IMR-90 (cell line): ENCODE measurements at regions of chr9 and their contacts with region 1.

Region 1: GRCh38 chr9:133485361-133486260 is 6.7 kb upstream of the SLC2A6 start:
- DNase-seq: no peak
- ATAC-seq: peak; percentile 4; the same call in 1 of the 2 replicates
- H3K4me3 ChIP-seq: no peak overlapping the region
- H3K27ac ChIP-seq: no peak overlapping the region
- H3K4me1 ChIP-seq: peaks cover 2% of the 10 kb centered on the region; the same call in 1 of the 2 replicates
- H3K27me3 ChIP-seq: peaks cover 7% of the 10 kb centered on the region; the same call in 1 of the 2 replicates
- CTCF ChIP-seq: no peak
- POLR2A ChIP-seq: no peak
- RAD21 ChIP-seq: no peak

Region 2: GRCh38 chr9:133023117-133023890 is 462.3 kb before region 1 on chr9:
- CTCF ChIA-PET with region 1: no interaction called
- POLR2A ChIA-PET with region 1: no interaction called
- dilution Hi-C with region 1: no loop called
- in situ Hi-C with region 1: loop called (anchors 25 kb)
- intact Hi-C with region 1: loop called (anchors 1 kb)
- DNase-seq: no peak
- ATAC-seq: no peak
- H3K4me3 ChIP-seq: no peak overlapping the region
- H3K27ac ChIP-seq: no peak overlapping the region
- H3K4me1 ChIP-seq: no peaks in the 10 kb centered on the region
- H3K27me3 ChIP-seq: no peaks in the 10 kb centered on the region; the same call in 1 of the 2 replicates
- CTCF ChIP-seq: no peak
- POLR2A ChIP-seq: no peak
- RAD21 ChIP-seq: no peak

Region 3: DNA sequence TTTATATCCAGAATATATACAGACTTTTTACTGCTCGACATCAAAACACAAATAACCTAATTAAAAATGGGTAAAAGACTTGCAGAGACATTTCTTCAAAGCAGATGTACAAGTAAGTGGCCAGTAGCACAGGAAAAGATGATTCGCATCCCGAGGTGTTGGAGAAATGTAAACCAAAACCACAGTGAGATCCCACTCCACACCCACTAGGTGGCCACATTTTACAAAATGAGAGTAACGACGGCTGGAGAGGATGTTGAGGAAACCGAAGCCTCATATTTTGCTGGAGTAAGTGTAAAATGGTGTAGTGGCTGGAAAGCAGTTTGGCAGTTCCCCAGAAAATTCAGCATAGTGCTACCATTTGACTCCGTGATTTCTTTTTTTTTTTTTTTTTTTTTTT is 300.6 kb before region 1 on chr9:
- CTCF ChIA-PET with region 1: no interaction called
- POLR2A ChIA-PET with region 1: no interaction called
- dilution Hi-C with region 1: no loop called
- in situ Hi-C with region 1: loop called (anchors 5 kb)
- intact Hi-C with region 1: no loop called
- DNase-seq: peak; percentile 62
- ATAC-seq: peak; percentile 79
- H3K4me3 ChIP-seq: no peak overlapping the region
- H3K27ac ChIP-seq: no peak overlapping the region
- H3K4me1 ChIP-seq: no peaks in the 10 kb centered on the region
- H3K27me3 ChIP-seq: peaks cover 45% of the 10 kb centered on the region
- CTCF ChIP-seq: peak; percentile 61
- POLR2A ChIP-seq: no peak
- RAD21 ChIP-seq: peak; percentile 42

Region 4: GRCh38 chr9:133356391-133357091 is 129.1 kb before region 1 on chr9 and contains the starts of genes SURF1 and SURF2:
- CTCF ChIA-PET with region 1: no interaction called
- POLR2A ChIA-PET with region 1: no interaction called
- dilution Hi-C with region 1: no loop called
- in situ Hi-C with region 1: no loop called
- intact Hi-C with region 1: loop called (anchors 2 kb)
- DNase-seq: peak; percentile 66
- ATAC-seq: peak; percentile 83
- H3K4me3 ChIP-seq: peak within 1 kb of the TSS; percentile 99
- H3K27ac ChIP-seq: peak within 1 kb of the TSS; percentile 87
- H3K4me1 ChIP-seq: peaks cover 10% of the 10 kb centered on the region; the same call in 1 of the 2 replicates
- H3K27me3 ChIP-seq: no peaks in the 10 kb centered on the region
- CTCF ChIP-seq: no peak
- POLR2A ChIP-seq: peak; percentile 40; the same call in 1 of the 2 replicates
- RAD21 ChIP-seq: no peak
- total RNA-seq, gene SURF1: 10.3 and 15.1 TPM in 2 replicates
- total RNA-seq, gene SURF2: 9.9 and 12.5 TPM in 2 replicates

Region 5: GRCh38 chr9:133406480-133407307 is 78.9 kb before region 1 on chr9:
- CTCF ChIA-PET with region 1: no interaction called
- POLR2A ChIA-PET with region 1: no interaction called
- dilution Hi-C with region 1: no loop called
- in situ Hi-C with region 1: loop called (anchors 10 kb)
- intact Hi-C with region 1: loop called (anchors 1 kb)
- DNase-seq: peak; percentile 70
- ATAC-seq: peak; percentile 96
- H3K4me3 ChIP-seq: no peak overlapping the region
- H3K27ac ChIP-seq: no peak overlapping the region
- H3K4me1 ChIP-seq: peaks cover 2% of the 10 kb centered on the region; the same call in 1 of the 2 replicates
- H3K27me3 ChIP-seq: no peaks in the 10 kb centered on the region
- CTCF ChIP-seq: peak; percentile 86
- POLR2A ChIP-seq: no peak
- RAD21 ChIP-seq: peak; percentile 64